ENCODE measurements at regions of chr2 and their contacts with region 1.

Region 1: GRCh38 chr2:102841107-102841840 is 79.4 kb downstream of the TMEM182 start:
- DNase-seq: peak; percentile 55
- H3K4me3 ChIP-seq: peak overlapping the region in 1 of 2 experiments; percentile 18; a peak in 1 of 4 replicates
- H3K27ac ChIP-seq: no peak overlapping the region
- H3K4me1 ChIP-seq: peaks cover 0 to 13% of the 10 kb centered on the region in 2 experiments; a peak in 2 of 4 replicates
- H3K27me3 ChIP-seq: no peaks in the 10 kb centered on the region; the same call in 1 of the 2 replicates
- CTCF ChIP-seq: peak; percentile 63
- EP300 ChIP-seq: no peak
- RAD21 ChIP-seq: peak; percentile 66

Region 2: GRCh38 chr2:102815285-102815684 is 26.0 kb before region 1 on chr2:
- CTCF ChIA-PET with region 1: interaction called, 13 read pairs
- POLR2A ChIA-PET with region 1: no interaction called
- DNase-seq: no peak
- H3K4me3 ChIP-seq: no peak overlapping the region
- H3K27ac ChIP-seq: no peak overlapping the region
- H3K4me1 ChIP-seq: no peaks in the 10 kb centered on the region
- H3K27me3 ChIP-seq: no peaks in the 10 kb centered on the region
- CTCF ChIP-seq: no peak
- EP300 ChIP-seq: no peak
- RAD21 ChIP-seq: no peak

Region 3: GRCh38 chr2:102826904-102827303 is 14.4 kb before region 1 on chr2:
- CTCF ChIA-PET with region 1: interaction called, 79 read pairs
- POLR2A ChIA-PET with region 1: no interaction called
- DNase-seq: peak; percentile 44
- H3K4me3 ChIP-seq: no peak overlapping the region
- H3K27ac ChIP-seq: no peak overlapping the region
- H3K4me1 ChIP-seq: peaks cover 0 to 5% of the 10 kb centered on the region in 2 experiments; a peak in 1 of 4 replicates
- H3K27me3 ChIP-seq: no peaks in the 10 kb centered on the region
- CTCF ChIP-seq: no peak
- EP300 ChIP-seq: no peak
- RAD21 ChIP-seq: no peak

Region 4: GRCh38 chr2:102872388-102872787 is 31.1 kb after region 1 on chr2:
- CTCF ChIA-PET with region 1: interaction called, 146 read pairs
- POLR2A ChIA-PET with region 1: no interaction called
- DNase-seq: peak; percentile 19
- H3K4me3 ChIP-seq: no peak overlapping the region
- H3K27ac ChIP-seq: no peak overlapping the region
- H3K4me1 ChIP-seq: no peaks in the 10 kb centered on the region
- H3K27me3 ChIP-seq: no peaks in the 10 kb centered on the region
- CTCF ChIP-seq: peak; percentile 47
- EP300 ChIP-seq: no peak
- RAD21 ChIP-seq: peak; percentile 76

Region 5: GRCh38 chr2:103161456-103162289 is 320.4 kb after region 1 on chr2:
- CTCF ChIA-PET with region 1: interaction called, 21 read pairs
- POLR2A ChIA-PET with region 1: no interaction called
- DNase-seq: peak; percentile 49
- H3K4me3 ChIP-seq: peak overlapping the region in 1 of 2 experiments; percentile 10; a peak in 1 of 4 replicates
- H3K27ac ChIP-seq: no peak overlapping the region
- H3K4me1 ChIP-seq: no peaks in the 10 kb centered on the region
- H3K27me3 ChIP-seq: 0 out of 2 replicates have a peak, but pooled peaks cover 10% of the 10 kb centered on the region
- CTCF ChIP-seq: peak; percentile 88
- EP300 ChIP-seq: no peak
- RAD21 ChIP-seq: peak; percentile 82

Measured in SK-N-SH (cell line).